ENCODE measurements at regions of chr16 and their contacts with region 1.

Region 1: DNA sequence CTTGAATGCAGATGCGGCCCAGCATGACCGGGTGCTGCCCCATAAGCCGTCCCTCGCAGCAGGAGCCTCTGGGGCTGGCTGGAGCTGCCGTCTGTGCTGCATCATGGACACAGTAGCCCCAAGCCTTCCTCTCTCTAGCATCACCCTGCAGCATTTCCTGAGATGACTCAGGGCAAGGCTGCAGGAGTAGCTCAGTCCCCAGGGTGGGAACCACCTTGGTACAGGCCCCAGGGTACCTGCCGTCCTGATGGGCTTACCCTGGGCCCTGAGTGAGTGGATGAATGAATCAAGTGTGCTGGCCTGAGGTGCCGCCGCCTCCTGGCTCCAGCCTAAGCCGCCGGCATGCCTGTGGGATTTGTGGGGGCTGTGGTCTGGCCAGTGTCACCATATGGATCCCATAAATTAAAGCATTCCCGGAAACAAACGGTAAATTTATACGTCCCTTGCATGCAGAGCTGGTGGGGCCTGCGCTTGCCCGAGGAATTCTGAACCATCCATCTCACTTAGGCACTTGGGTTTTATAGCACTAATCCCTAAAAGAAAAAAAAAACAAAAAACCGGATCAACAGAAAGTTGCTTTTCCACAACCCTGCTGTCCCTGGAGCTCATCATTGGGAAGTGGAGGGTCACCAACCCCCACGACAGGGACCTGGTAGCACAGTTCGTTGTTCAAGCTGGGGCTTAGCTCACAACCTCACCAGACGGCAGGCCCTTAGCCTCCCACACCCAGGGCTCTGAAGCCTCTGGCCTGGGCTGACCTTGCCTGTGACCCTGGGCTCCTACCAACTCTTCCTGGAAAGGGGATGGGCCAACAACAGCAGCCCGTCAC is 242.6 kb upstream of the CIBAR2 start:
- DNase-seq: no peak
- H3K4me3 ChIP-seq: no peak overlapping the region
- H3K27ac ChIP-seq: no peak overlapping the region
- H3K27me3 ChIP-seq: no peaks in the 10 kb centered on the region
- CTCF ChIP-seq: no peak

Region 2: DNA sequence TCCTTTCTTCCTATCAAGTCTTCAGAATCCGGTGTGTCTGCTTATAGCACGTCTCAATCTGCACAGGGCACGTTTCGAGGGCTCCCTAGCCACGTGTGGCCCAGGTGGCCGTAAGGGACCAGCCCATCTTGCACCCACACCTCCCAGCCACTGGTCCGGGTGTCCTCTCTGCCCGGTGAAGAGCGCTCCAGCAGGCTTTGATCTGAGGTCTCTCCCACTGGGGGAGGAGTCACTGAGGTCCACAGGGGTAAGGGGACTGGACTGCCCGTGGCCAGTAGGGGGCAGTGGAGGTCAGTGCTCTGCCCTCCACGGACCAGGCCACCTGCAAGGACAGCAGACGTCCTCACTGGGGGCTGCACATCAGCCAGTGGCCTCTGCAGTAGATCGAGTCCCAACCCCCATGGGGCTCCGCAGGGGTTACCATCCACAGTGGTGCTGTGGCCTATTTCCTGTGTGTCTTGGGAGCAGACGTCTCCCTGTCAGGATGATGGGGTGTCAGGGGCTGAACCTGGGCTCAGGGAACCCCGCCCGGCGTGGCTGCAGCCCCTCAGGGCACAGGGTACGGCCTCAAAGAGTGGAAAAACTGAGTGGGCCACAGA is 38.5 kb before region 1 on chr16:
- intact Hi-C with region 1: loop called in 1 of 2 experiments (anchors 5 kb)
- DNase-seq: peak in 6 of 10 donors; percentile 51 to 79 (median 59)
- H3K4me3 ChIP-seq: no peak overlapping the region
- H3K27ac ChIP-seq: peak overlapping the region in 3 of 59 donors; percentile 18 to 53 (median 44)
- H3K27me3 ChIP-seq: no peaks in the 10 kb centered on the region
- CTCF ChIP-seq: peak; percentile 27 to 95 (median 87)

Region 3: DNA sequence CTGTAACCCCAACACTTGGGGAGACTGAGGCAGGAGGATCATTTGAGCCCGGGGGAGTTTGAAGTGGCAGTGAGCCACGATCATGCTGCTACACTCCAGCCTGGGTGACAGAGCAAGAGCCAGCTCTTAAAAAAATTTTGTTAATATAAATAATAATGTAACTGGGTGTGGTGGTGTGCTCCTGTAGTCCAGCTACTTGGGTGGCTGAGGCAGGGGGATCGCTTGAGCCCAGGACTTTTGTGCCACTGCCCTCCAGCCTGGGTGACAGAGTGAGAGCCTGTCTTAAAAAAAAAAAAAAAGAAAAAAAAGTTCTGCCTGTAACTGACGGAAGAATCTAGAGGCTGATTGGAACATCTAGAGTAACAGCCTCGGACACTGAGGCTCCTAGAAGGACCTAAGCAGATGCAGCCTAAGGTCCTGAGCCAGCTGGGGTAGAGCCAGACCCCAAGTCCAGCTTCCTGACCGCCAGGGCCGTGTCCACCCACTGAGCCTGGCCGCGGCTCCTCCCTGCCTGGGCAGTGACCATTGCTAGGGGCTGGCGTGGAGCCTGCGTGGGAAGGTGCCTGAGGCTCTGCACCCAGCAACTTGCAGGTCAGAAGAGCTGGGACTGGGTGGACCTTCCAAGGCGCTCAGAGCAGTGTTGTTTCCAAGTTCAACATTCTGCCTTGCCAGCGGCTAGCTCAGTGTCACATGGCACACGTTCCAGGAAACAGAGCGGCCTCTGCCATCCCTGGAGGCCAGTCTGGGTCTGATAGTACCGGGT is 33.2 kb before region 1 on chr16:
- intact Hi-C with region 1: loop called (anchors 1 to 5 kb)
- DNase-seq: peak; percentile 51 to 87 (median 80)
- H3K4me3 ChIP-seq: peak overlapping the region in 10 of 59 donors; percentile 5 to 32 (median 20)
- H3K27ac ChIP-seq: peak overlapping the region in 45 of 59 donors; percentile 2 to 81 (median 55)
- H3K27me3 ChIP-seq: no peaks in the 10 kb centered on the region
- CTCF ChIP-seq: peak in 9 of 56 donors; percentile 1 to 25 (median 12)

Measured in dorsolateral prefrontal cortex (tissue), 120 donors.